IMR-90 (cell line): ENCODE measurements at regions of chr5 and their contacts with region 1.

Region 1: DNA sequence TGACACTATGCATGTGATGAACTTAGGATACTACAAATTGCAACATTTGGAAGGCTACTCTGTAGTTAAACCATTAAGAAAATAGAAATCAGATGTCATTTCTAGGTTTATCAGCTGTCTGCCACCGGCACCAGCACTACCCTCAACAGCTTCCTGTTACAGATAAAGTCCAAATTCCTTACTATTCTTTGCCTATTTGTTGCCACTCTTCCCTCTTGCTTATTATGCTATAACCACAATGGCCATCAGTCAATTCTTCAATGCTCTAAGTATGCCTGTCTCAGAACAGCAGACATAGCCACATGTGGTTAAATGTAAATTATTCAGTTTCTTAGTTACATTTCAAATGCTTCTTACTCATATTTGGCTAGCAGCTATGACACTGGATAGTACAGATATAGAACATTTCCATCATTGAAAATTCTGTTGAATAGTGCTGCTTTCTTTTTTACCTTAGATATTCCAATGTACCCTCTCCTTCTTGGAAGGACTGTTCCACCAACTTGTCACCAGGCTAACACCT is 21.0 kb downstream of the DHX29 start:
- DNase-seq: no peak
- ATAC-seq: no peak
- H3K4me3 ChIP-seq: no peak overlapping the region
- H3K27ac ChIP-seq: no peak overlapping the region
- H3K4me1 ChIP-seq: no peaks in the 10 kb centered on the region
- H3K27me3 ChIP-seq: no peaks in the 10 kb centered on the region
- CTCF ChIP-seq: no peak
- POLR2A ChIP-seq: no peak
- RAD21 ChIP-seq: no peak

Region 2: DNA sequence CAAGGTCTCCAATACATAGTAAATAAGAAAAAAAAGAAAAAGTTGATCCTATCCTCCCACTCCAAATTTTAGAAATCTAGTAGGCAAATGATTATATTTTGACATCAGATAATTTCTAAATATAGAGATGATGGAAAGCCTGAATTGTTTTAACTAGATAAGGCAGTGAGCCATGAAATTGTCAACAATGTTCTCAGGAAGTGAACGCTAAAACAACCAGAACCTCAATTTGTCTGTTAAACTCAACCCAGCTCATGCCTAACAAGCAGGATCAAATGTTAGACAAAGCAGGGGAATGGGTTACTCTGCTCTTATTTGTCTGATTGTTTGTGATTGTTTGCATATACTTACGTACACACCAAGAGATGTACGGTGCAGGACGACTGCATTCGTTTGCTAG is 350.3 kb before region 1 on chr5:
- CTCF ChIA-PET with region 1: no interaction called
- POLR2A ChIA-PET with region 1: no interaction called
- dilution Hi-C with region 1: no loop called
- in situ Hi-C with region 1: no loop called
- intact Hi-C with region 1: no loop called
- DNase-seq: no peak
- ATAC-seq: no peak
- H3K4me3 ChIP-seq: no peak overlapping the region
- H3K27ac ChIP-seq: no peak overlapping the region
- H3K4me1 ChIP-seq: no peaks in the 10 kb centered on the region
- H3K27me3 ChIP-seq: peaks cover 67% of the 10 kb centered on the region
- CTCF ChIP-seq: no peak
- POLR2A ChIP-seq: no peak
- RAD21 ChIP-seq: no peak

Region 3: GRCh38 chr5:55254802-55255201 is 31.7 kb before region 1 on chr5:
- CTCF ChIA-PET with region 1: no interaction called
- POLR2A ChIA-PET with region 1: no interaction called
- dilution Hi-C with region 1: no loop called
- in situ Hi-C with region 1: no loop called
- intact Hi-C with region 1: loop called (anchors 5 kb)
- DNase-seq: no peak
- ATAC-seq: no peak
- H3K4me3 ChIP-seq: no peak overlapping the region
- H3K27ac ChIP-seq: no peak overlapping the region
- H3K4me1 ChIP-seq: no peaks in the 10 kb centered on the region
- H3K27me3 ChIP-seq: no peaks in the 10 kb centered on the region
- CTCF ChIP-seq: no peak
- POLR2A ChIP-seq: no peak
- RAD21 ChIP-seq: no peak

Region 4: DNA sequence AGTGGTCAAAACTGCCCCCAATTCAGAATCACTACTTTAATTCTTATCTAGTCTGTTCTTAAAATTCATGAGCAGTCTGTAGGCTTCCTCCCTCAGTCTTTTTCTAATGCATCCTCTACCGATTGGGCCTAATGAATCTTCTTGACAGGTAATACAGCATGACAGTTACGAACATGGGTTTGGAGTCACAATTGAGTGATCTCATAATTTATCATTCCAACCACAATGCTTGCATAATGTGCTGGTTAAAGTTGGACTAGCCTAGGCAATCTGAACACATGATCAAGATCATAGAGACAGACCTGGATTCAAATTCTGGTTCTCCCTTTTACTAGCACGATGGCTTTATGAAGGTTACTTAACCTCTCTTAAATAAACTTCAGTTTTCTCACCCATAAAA is 1589.9 kb after region 1 on chr5:
- CTCF ChIA-PET with region 1: no interaction called
- POLR2A ChIA-PET with region 1: no interaction called
- dilution Hi-C with region 1: no loop called
- in situ Hi-C with region 1: no loop called
- intact Hi-C with region 1: loop called (anchors 10 kb)
- DNase-seq: peak; percentile 14
- ATAC-seq: no peak
- H3K4me3 ChIP-seq: no peak overlapping the region
- H3K27ac ChIP-seq: no peak overlapping the region
- H3K4me1 ChIP-seq: no peaks in the 10 kb centered on the region
- H3K27me3 ChIP-seq: no peaks in the 10 kb centered on the region
- CTCF ChIP-seq: no peak
- POLR2A ChIP-seq: no peak
- RAD21 ChIP-seq: no peak